T-cell (primary cell): ENCODE measurements at regions of chr15 and their contacts with region 1.

Region 1: GRCh38 chr15:81274931-81275707 is 48.8 kb downstream of the STARD5 start:
- DNase-seq: peak; percentile 52 to 93 (median 76)
- ATAC-seq: peak; percentile 88 to 95 (median 94)
- H3K4me3 ChIP-seq: no peak overlapping the region
- H3K4me3 Mint-ChIP-seq: peak overlapping the region in 1 of 3 donors; percentile 50
- H3K27ac ChIP-seq: no peak overlapping the region
- H3K27ac Mint-ChIP-seq: peak overlapping the region; percentile 81 to 84
- H3K4me1 ChIP-seq: peaks cover 19 to 21% of the 10 kb centered on the region in 2 experiments
- H3K4me1 Mint-ChIP-seq: peaks cover 43 to 49% (median 48%) of the 10 kb centered on the region in 3 donors
- H3K27me3 ChIP-seq: no peaks in the 10 kb centered on the region
- H3K27me3 Mint-ChIP-seq: no peaks in the 10 kb centered on the region

Region 2: GRCh38 chr15:81296673-81297072 is 21.6 kb after region 1 on chr15:
- CTCF ChIA-PET with region 1: interaction called, 8 to 15 read pairs
- POLR2A ChIA-PET with region 1: interaction called in 1 of 2 experiments, 3 read pairs
- DNase-seq: peak; percentile 64 to 90 (median 74)
- ATAC-seq: peak; percentile 56 to 75 (median 70)
- H3K4me3 ChIP-seq: peak overlapping the region; percentile 68 to 98
- H3K4me3 Mint-ChIP-seq: peak overlapping the region; percentile 95 to 100 (median 100)
- H3K27ac ChIP-seq: peak overlapping the region; percentile 94
- H3K27ac Mint-ChIP-seq: peak overlapping the region; percentile 100
- H3K4me1 ChIP-seq: peaks cover 47 to 75% of the 10 kb centered on the region in 2 experiments
- H3K4me1 Mint-ChIP-seq: peaks cover 58 to 92% (median 64%) of the 10 kb centered on the region in 3 donors
- H3K27me3 ChIP-seq: no peaks in the 10 kb centered on the region
- H3K27me3 Mint-ChIP-seq: no peaks in the 10 kb centered on the region

Region 3: GRCh38 chr15:81308260-81308659 is 33.1 kb after region 1 on chr15:
- CTCF ChIA-PET with region 1: interaction called, 3 to 11 read pairs
- POLR2A ChIA-PET with region 1: interaction called in 1 of 2 experiments, 3 read pairs
- DNase-seq: no peak
- ATAC-seq: no peak
- H3K4me3 ChIP-seq: no peak overlapping the region
- H3K4me3 Mint-ChIP-seq: no peak overlapping the region
- H3K27ac ChIP-seq: no peak overlapping the region
- H3K27ac Mint-ChIP-seq: peak overlapping the region; percentile 61 to 69
- H3K4me1 ChIP-seq: peaks cover 44 to 78% of the 10 kb centered on the region in 2 experiments
- H3K4me1 Mint-ChIP-seq: peaks cover 82 to 92% (median 89%) of the 10 kb centered on the region in 3 donors
- H3K27me3 ChIP-seq: no peaks in the 10 kb centered on the region
- H3K27me3 Mint-ChIP-seq: no peaks in the 10 kb centered on the region

Region 4: DNA sequence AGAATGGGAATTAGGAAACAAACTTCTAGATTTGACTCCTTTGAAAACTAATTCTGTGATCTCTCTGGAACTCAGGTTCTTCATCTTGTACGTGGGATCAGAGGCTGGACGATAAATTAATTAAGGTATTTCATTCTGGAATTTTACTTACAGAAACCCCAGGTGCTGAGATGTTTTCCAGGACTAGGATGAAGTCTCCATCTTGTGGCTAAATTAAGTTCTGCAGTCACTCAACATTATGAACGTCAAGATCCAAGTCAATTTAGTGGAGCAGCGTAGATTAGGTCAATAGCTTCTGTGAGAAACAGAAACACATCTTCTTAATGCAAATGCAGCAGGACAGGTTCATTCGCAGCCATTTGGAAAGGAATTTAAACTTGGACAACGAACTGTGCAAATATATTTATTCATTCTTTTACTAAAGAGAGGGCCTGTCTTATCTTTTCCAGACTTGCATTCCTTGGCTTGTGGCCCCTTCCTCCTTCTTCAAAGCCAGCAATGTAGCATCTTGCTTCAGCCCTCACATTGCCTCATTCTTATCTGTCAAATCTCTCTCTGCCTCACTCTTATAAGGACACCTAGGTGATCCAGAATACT is 125.6 kb after region 1 on chr15:
- CTCF ChIA-PET with region 1: interaction called, 4 to 27 read pairs
- POLR2A ChIA-PET with region 1: no interaction called
- DNase-seq: peak in 2 of 35 experiments; percentile 32 to 77
- ATAC-seq: peak in 1 of 4 experiments; percentile 48
- H3K4me3 ChIP-seq: no peak overlapping the region
- H3K4me3 Mint-ChIP-seq: no peak overlapping the region
- H3K27ac ChIP-seq: no peak overlapping the region
- H3K27ac Mint-ChIP-seq: no peak overlapping the region
- H3K4me1 ChIP-seq: no peaks in the 10 kb centered on the region
- H3K4me1 Mint-ChIP-seq: peaks cover 0 to 3% (median 0%) of the 10 kb centered on the region in 3 donors
- H3K27me3 ChIP-seq: no peaks in the 10 kb centered on the region
- H3K27me3 Mint-ChIP-seq: no peaks in the 10 kb centered on the region

Region 5: DNA sequence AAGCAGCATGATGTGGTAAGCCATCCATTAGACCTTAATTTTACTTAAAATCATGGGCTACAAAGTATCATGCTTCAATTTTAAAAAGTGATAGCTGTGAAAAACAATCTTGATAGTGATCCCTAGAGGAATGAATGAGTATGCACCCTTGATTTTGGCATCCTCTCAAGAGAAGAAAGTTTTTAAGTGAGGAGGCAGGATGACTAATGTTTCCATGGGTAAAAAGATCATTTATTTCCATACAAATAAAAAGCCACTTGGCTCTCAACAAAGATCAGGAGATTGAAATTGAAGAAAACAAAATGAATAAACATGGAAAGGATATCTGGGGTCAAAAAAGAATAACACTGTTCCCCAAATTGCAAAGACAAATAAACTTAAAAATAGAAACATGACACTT is 465.3 kb after region 1 on chr15:
- CTCF ChIA-PET with region 1: no interaction called
- POLR2A ChIA-PET with region 1: no interaction called
- DNase-seq: no peak
- ATAC-seq: no peak
- H3K4me3 ChIP-seq: no peak overlapping the region
- H3K4me3 Mint-ChIP-seq: no peak overlapping the region
- H3K27ac ChIP-seq: no peak overlapping the region
- H3K27ac Mint-ChIP-seq: no peak overlapping the region
- H3K4me1 ChIP-seq: no peaks in the 10 kb centered on the region
- H3K4me1 Mint-ChIP-seq: no peaks in the 10 kb centered on the region
- H3K27me3 ChIP-seq: no peaks in the 10 kb centered on the region
- H3K27me3 Mint-ChIP-seq: peaks cover 0 to 3% of the 10 kb centered on the region in 2 donors